ENCODE measurements at regions of chr1 and their contacts with region 1.

Region 1: GRCh38 chr1:6602669-6603237 is at the start of gene KLHL21:
- DNase-seq: peak; percentile 75
- H3K4me3 Mint-ChIP-seq: peak within 1 kb of the TSS; percentile 90
- H3K27ac Mint-ChIP-seq: peak within 1 kb of the TSS; percentile 96
- H3K4me1 Mint-ChIP-seq: peaks cover 28% of the 10 kb centered on the region
- H3K27me3 Mint-ChIP-seq: peaks cover 2% of the 10 kb centered on the region
- total RNA-seq, gene KLHL21: 27.8 and 28.1 TPM in 2 replicates

Region 2: DNA sequence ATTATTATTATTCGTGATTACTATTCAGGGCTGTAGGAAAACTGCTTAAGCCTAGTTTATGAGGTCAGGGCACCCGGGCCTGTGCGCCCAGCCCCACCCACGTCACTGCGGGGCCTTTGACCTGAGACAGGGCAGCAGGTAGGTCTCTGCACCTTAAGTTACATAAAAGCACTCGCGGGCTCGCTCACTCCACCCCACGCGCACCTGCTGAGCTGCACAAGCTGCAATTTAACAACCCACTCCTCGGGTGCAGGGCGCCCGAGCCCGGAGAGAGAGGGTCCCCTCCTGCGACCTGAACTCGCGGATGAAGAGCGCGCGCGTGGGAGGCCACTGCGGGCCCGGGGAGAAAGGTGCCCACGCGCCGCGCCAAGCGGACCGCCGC is 367.5 kb before region 1 on chr1:
- intact Hi-C with region 1: loop called (anchors 5 kb)
- DNase-seq: peak; percentile 14
- H3K4me3 Mint-ChIP-seq: peak overlapping the region; percentile 91
- H3K27ac Mint-ChIP-seq: peak overlapping the region; percentile 87
- H3K4me1 Mint-ChIP-seq: peaks cover 19% of the 10 kb centered on the region
- H3K27me3 Mint-ChIP-seq: peaks cover 9% of the 10 kb centered on the region

Region 3: GRCh38 chr1:6554031-6554906 is 48.5 kb before region 1 on chr1 and contains the start of gene NOL9:
- intact Hi-C with region 1: loop called (anchors 1 kb)
- DNase-seq: peak; percentile 93
- H3K4me3 Mint-ChIP-seq: peak within 1 kb of the TSS; percentile 87
- H3K27ac Mint-ChIP-seq: peak within 1 kb of the TSS; percentile 81
- H3K4me1 Mint-ChIP-seq: peaks cover 7% of the 10 kb centered on the region
- H3K27me3 Mint-ChIP-seq: no peaks in the 10 kb centered on the region
- total RNA-seq, gene NOL9: 50.4 and 58.9 TPM in 2 replicates

Region 4: GRCh38 chr1:6624710-6625583 is 22.2 kb after region 1 on chr1 and contains the start of gene THAP3:
- intact Hi-C with region 1: loop called (anchors 1 kb)
- DNase-seq: peak; percentile 79
- H3K4me3 Mint-ChIP-seq: peak within 1 kb of the TSS; percentile 96
- H3K27ac Mint-ChIP-seq: peak within 1 kb of the TSS; percentile 86
- H3K4me1 Mint-ChIP-seq: peaks cover 24% of the 10 kb centered on the region
- H3K27me3 Mint-ChIP-seq: no peaks in the 10 kb centered on the region
- total RNA-seq, gene THAP3: 22.2 and 23.5 TPM in 2 replicates

Region 5: DNA sequence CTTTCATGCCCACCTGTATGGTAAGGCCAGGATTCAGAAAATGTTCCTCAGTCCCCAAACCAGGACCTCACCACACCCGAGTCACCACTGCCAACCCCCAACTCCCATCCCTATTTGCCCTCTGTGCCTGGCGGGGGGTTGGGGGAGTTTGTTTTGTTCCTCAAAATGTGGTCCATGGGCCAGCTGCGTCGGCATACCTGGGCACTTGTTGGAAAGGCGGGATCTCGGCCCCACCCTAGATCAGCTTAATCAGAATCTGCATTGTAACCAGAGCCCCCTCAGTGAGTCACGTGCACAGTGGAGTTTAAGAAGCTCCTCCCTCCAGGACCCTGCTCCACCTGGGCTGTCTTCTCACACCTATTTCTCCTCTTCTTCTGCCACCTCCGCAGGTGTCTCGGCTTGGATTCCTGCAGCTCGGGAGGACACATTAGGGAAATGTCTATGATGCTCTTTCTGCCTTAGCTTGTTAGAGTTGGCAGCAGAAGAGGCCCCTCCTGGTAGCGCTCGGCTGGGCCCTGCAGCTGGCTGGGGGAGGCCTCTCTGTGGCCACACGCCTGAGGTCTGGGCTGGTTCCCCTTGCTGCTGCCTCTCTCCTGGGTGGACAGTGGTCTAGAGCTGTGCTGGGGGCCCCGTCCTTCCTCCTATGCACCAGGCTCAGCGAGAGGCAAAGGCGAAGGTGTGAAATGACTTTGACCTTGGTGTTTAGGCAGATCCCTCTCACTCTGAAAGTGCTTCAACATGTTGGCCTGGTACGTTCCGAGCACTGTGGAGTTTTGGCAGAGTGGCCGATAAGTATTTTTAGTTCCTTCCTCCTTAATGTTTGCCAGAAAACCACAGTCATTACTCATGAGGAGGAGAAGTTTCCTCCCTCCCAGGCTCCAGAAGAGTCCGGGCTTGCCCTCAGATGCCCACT is 140.7 kb after region 1 on chr1:
- intact Hi-C with region 1: loop called (anchors 5 kb)
- DNase-seq: no peak
- H3K4me3 Mint-ChIP-seq: no peak overlapping the region
- H3K27ac Mint-ChIP-seq: peak overlapping the region; percentile 8
- H3K4me1 Mint-ChIP-seq: peaks cover 10% of the 10 kb centered on the region
- H3K27me3 Mint-ChIP-seq: peaks cover 9% of the 10 kb centered on the region

Measured in activated T-helper 1 cell treated with anti-CD3 and anti-CD28 coated beads, Interleukin-12 subunit alpha, Interleukin-12 subunit beta, Interleukin-2, Interleukin-4 antibody, amounts not matched to agents 30 ng/mL and 10 ng/mL and 1 ng/mL, durations not matched to agents 14 hours and 24 hours and 36 hours (primary cell).